ENCODE measurements at regions of chr1 and their contacts with region 1.

Region 1: DNA sequence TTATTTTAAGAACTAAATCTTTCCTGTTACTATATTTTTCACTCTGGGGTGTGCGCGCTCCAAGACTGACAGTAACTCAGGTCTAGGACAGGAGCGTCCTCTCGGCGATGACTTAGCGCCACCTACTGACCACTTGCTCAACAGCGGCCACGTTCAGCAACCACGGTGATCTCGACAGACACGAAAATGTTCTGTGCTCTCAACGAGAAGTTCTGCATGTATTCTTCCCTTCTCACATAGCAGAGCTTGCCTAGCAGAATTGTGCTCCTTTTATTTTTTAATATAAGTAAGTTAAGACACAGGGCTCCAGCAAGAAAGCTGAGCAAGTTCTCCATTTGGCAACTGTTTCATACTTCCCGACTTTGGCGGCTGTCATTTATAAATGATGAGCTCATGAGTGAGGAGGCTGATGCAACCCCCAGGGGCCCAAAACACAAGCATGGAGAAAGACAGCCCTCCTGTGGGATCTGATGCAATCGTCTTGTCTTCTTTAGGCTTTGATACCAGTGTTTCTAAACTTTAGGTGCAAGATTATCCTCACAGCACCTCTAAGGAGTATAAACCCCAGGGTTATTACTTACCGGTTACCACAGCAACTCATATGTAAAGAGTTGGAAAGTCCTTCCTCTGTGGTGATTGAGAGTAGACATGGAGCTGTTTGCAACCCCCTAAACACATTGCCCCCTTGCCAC is 92.6 kb downstream of the HHIPL2 start:
- DNase-seq: peak; percentile 87
- ATAC-seq: peak; percentile 96
- H3K4me3 Mint-ChIP-seq: no peak overlapping the region
- H3K27ac Mint-ChIP-seq: no peak overlapping the region
- H3K4me1 Mint-ChIP-seq: peaks cover 8% of the 10 kb centered on the region
- H3K27me3 Mint-ChIP-seq: no peaks in the 10 kb centered on the region
- CTCF ChIP-seq: peak; percentile 87

Region 2: DNA sequence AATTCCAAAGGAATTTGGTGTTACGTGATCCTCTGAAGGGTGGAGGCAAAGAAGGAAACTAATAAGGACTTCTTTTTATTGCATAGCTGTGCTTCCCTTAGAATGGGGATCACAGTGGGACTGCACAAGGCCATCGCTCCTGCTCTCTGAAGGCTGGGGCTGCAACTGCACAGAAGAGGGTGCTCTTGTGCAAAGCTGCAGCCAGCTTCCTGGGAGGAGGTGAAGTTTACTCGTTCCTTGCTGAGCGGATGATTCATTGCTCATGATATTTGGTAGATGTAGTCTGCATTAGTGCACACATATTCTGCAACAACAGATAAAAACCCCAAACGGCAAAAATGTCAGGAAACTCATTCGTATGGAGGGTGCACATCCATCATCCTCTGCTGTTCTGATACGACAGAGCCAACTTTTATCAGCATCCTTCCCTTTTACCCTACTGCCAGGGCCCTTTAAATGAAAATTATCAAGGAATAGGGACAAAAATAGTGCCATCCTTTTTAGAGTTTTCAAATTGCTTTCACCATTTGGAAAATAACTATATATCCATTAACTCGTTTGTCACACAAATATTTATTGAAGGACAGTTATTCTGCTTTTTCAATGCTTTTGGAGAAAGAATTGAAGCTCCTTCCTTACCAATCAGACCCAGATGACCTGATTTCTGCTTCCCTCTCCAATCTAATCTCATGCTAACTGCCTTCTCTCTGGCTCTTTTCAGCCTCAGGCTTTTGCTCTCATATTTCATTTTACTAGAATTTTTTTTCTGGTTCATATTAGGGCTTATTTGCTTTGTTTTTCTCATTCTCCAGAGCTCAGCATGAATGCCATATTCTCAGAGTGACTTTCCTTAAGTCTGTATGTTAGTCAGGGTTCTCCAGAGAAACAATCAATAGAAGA is 977.0 kb before region 1 on chr1:
- CTCF ChIA-PET with region 1: interaction called, 10 read pairs
- POLR2A ChIA-PET with region 1: no interaction called
- DNase-seq: peak; percentile 65
- ATAC-seq: peak; percentile 100
- H3K4me3 Mint-ChIP-seq: no peak overlapping the region
- H3K27ac Mint-ChIP-seq: no peak overlapping the region
- H3K4me1 Mint-ChIP-seq: 0 out of 2 replicates have a peak, but pooled peaks cover 3% of the 10 kb centered on the region
- H3K27me3 Mint-ChIP-seq: no peaks in the 10 kb centered on the region
- CTCF ChIP-seq: no peak

Region 3: DNA sequence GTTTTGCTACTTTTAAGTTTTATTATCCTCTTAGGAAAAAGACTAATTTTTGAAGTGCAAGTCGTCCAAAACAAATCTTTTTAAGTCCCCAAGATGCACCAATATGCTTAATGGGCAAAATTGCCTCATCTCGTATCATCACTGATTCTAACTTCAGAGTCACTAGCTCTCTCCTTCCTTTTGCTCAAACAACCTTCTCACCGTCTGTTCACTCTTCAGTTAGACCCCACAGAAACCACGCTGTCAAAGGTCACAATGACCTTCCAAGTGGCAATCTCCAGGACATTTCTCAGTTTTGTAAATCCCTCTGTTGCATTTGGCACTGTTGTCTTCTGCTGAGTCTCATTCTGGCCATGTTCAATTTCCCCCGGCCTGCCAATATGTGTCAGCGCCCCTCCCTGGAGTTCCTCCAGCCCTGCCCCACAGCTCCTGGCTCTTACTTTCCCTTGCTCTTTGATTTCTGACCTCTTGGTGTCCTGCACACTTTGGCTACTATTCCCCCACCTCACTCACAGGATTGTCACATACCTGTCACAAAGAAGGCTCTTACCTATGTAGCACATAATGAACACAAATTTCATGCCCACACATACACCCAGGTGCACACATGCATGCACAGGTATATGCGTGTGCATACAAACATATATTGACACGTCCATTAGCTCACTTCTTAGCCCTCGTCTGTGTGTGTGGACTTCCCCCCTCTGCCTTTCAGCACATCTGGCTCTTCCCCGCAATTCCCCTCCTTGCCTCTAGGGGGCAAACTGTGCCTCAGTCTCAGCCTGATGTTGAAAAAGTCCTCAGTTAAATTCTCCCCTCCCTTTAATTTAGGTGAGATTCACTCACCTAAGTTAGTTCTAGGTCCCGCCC is 359.5 kb before region 1 on chr1:
- CTCF ChIA-PET with region 1: interaction called, 11 read pairs
- POLR2A ChIA-PET with region 1: no interaction called
- DNase-seq: peak; percentile 72
- ATAC-seq: peak; percentile 88
- H3K4me3 Mint-ChIP-seq: no peak overlapping the region
- H3K27ac Mint-ChIP-seq: no peak overlapping the region
- H3K4me1 Mint-ChIP-seq: no peaks in the 10 kb centered on the region; the same call in 1 of the 2 replicates
- H3K27me3 Mint-ChIP-seq: no peaks in the 10 kb centered on the region
- CTCF ChIP-seq: no peak; the same call in none of the 2 replicates

Region 4: DNA sequence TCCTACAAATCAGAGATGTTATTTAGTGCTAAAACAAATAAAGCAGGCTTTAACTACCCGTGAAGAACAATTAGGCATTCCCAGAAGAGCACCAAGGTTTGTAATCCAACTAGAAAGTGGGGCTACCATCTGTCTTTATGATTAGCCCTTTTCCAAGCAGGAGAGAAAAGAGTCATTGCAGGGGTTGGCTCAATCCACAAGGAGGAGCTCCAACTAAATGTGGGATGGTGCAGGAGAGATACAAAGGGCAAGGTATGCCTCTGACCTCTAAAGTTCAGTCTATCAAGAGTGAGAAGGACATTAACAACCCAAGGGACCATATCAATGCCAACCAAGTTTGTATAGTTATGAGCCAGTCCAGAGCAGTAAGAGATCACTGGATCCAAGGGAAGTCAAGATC is 330.7 kb before region 1 on chr1:
- CTCF ChIA-PET with region 1: interaction called, 26 read pairs
- POLR2A ChIA-PET with region 1: no interaction called
- DNase-seq: no peak
- ATAC-seq: peak; percentile 99
- H3K4me3 Mint-ChIP-seq: no peak overlapping the region
- H3K27ac Mint-ChIP-seq: no peak overlapping the region
- H3K4me1 Mint-ChIP-seq: no peaks in the 10 kb centered on the region
- H3K27me3 Mint-ChIP-seq: no peaks in the 10 kb centered on the region
- CTCF ChIP-seq: peak; percentile 13; the same call in 1 of the 2 replicates

Region 5: GRCh38 chr1:222443566-222443965 is 11.8 kb before region 1 on chr1:
- CTCF ChIA-PET with region 1: interaction called, 12 read pairs
- POLR2A ChIA-PET with region 1: no interaction called
- DNase-seq: no peak
- ATAC-seq: no peak
- H3K4me3 Mint-ChIP-seq: no peak overlapping the region
- H3K27ac Mint-ChIP-seq: no peak overlapping the region
- H3K4me1 Mint-ChIP-seq: peaks cover 13% of the 10 kb centered on the region
- H3K27me3 Mint-ChIP-seq: no peaks in the 10 kb centered on the region
- CTCF ChIP-seq: no peak

Region 6: GRCh38 chr1:222465211-222466041 is 10.1 kb after region 1 on chr1:
- CTCF ChIA-PET with region 1: interaction called, 21 read pairs
- POLR2A ChIA-PET with region 1: no interaction called
- DNase-seq: peak; percentile 93
- ATAC-seq: peak; percentile 98
- H3K4me3 Mint-ChIP-seq: peak overlapping the region; percentile 89
- H3K27ac Mint-ChIP-seq: peak overlapping the region; percentile 98
- H3K4me1 Mint-ChIP-seq: peaks cover 3% of the 10 kb centered on the region
- H3K27me3 Mint-ChIP-seq: no peaks in the 10 kb centered on the region
- CTCF ChIP-seq: peak; percentile 99